Activated CD4-positive, alpha-beta memory T cell treated with anti-CD3 and anti-CD28 coated beads, Interleukin-2, amount 10 ng/mL, durations not matched to agents 7 days and 5 days (primary cell): ENCODE measurements at regions of chr9 and their contacts with region 1.

Region 1: GRCh38 chr9:132877824-132878694 is at the start of gene AK8:
- DNase-seq: peak; percentile 79
- H3K4me3 Mint-ChIP-seq: peak within 1 kb of the TSS; percentile 78
- H3K27ac Mint-ChIP-seq: peak within 1 kb of the TSS; percentile 76
- H3K4me1 Mint-ChIP-seq: peaks cover 38% of the 10 kb centered on the region
- H3K27me3 Mint-ChIP-seq: peaks cover 18% of the 10 kb centered on the region
- total RNA-seq, gene AK8: not detected

Region 2: GRCh38 chr9:132854832-132855231 is 23.2 kb before region 1 on chr9:
- CTCF ChIA-PET with region 1: no interaction called
- POLR2A ChIA-PET with region 1: no interaction called
- DNase-seq: no peak
- H3K4me3 Mint-ChIP-seq: no peak overlapping the region
- H3K27ac Mint-ChIP-seq: no peak overlapping the region
- H3K4me1 Mint-ChIP-seq: peaks cover 11% of the 10 kb centered on the region
- H3K27me3 Mint-ChIP-seq: peaks cover 9% of the 10 kb centered on the region

Region 3: DNA sequence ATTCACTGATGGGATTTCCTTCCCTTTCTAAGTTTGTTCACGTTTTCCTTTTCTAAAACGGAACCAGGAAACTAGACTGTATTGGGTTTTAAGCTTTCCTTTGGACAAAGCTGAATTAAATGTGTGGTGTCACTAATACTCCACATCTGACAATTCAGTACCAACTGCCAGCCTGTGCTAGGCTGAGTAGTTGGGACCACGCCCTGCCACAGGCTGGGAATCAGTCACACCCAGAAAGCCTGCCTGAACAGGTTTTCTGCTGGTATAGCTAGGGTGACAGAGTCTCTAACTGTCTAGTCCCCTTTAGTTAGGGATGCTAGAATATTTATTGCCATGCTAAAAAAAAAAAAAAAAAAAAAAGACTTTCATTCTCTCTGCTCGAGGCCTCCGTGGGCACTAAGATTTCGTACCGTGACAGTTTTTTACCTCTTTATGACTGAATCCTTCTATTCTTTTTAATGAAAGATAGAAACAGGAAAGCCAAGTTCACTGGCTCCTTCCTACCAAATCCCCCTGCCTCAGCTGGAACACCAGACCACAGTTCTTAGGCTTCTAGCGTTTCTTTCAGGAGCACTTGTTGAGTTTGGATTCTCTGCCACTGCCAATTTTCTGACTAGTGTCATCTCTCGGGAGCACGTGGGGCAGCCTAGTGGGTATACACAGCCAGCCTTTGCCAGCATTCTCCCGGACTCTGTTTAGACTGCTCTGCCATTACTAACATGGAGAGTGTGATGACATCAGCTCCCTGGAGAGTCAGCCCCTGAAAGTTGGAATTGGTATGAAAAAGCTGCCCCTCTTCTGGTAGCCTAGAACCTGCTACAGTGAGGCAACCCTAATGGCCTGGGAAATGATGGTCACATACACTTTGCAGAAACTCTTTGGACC is 16.5 kb after region 1 on chr9:
- CTCF ChIA-PET with region 1: interaction called, 5 read pairs
- POLR2A ChIA-PET with region 1: interaction called, 11 read pairs
- DNase-seq: no peak
- H3K4me3 Mint-ChIP-seq: no peak overlapping the region
- H3K27ac Mint-ChIP-seq: peak overlapping the region; percentile 9
- H3K4me1 Mint-ChIP-seq: peaks cover 11% of the 10 kb centered on the region
- H3K27me3 Mint-ChIP-seq: no peaks in the 10 kb centered on the region

Region 4: GRCh38 chr9:132944302-132945185 is 66.5 kb after region 1 on chr9 and contains the start of gene TSC1:
- CTCF ChIA-PET with region 1: no interaction called
- POLR2A ChIA-PET with region 1: interaction called, 10 read pairs
- DNase-seq: peak; percentile 98
- H3K4me3 Mint-ChIP-seq: peak within 1 kb of the TSS; percentile 91
- H3K27ac Mint-ChIP-seq: peak within 1 kb of the TSS; percentile 98
- H3K4me1 Mint-ChIP-seq: peaks cover 26% of the 10 kb centered on the region
- H3K27me3 Mint-ChIP-seq: no peaks in the 10 kb centered on the region
- total RNA-seq, gene TSC1: 30.0 to 31.0 TPM